AG04449 (cell line): ENCODE measurements at regions of chr12 and their contacts with region 1.

Region 1: GRCh38 chr12:14257734-14258574 is 107.5 kb upstream of the ATF7IP start:
- DNase-seq: peak; percentile 99
- H3K4me3 ChIP-seq: no peak overlapping the region
- CTCF ChIP-seq: no peak

Region 2: GRCh38 chr12:14365294-14366208 is 107.6 kb after region 1 on chr12 and contains the start of gene ATF7IP:
- CTCF ChIA-PET with region 1: interaction called, 18 read pairs
- POLR2A ChIA-PET with region 1: interaction called, 16 read pairs
- DNase-seq: peak; percentile 89
- H3K4me3 ChIP-seq: peak within 1 kb of the TSS; percentile 79
- CTCF ChIP-seq: peak; percentile 25

Region 3: DNA sequence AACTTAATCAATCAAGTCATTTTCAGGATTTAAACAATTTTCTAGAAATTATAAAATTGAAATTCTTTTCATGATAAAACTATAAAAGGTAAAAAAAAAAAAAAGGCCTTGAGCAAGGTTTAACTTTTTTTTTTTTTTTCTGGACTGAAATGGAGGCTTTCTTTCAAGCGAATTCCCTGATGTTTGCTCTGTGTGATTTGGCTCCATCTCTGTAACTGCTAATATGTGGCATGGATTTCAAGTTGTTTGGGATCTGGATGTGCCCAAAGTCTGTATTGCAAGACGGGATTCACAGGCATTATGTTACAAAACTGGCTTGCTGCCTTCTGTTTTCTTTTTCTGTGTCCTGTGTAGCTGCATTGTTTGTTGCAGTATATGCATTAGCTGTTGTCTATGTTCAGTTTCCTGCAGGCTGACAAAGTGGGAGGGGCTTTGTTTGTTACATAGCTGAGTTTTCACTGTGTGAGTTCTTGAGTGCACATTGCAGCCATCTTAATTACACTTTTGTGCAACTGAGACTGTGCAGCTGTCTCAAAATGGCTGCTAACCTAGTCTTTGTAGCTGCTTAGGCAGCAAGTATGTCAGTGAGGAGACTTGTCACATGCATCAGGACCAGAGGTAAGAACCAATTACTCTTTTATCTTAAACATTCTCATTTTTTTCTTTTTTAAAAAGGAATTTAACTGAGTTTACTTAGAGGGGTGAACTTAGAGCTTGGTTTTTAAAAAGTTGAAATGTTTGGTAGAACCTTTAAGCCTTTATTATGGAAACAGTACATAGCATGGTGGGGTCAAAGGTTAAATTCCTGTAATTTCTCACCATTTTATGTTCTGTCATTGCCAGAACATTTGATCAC is 127.1 kb after region 1 on chr12:
- CTCF ChIA-PET with region 1: interaction called, 15 read pairs
- POLR2A ChIA-PET with region 1: interaction called, 9 read pairs
- DNase-seq: peak; percentile 75
- H3K4me3 ChIP-seq: peak overlapping the region; percentile 36
- CTCF ChIP-seq: no peak

Region 4: DNA sequence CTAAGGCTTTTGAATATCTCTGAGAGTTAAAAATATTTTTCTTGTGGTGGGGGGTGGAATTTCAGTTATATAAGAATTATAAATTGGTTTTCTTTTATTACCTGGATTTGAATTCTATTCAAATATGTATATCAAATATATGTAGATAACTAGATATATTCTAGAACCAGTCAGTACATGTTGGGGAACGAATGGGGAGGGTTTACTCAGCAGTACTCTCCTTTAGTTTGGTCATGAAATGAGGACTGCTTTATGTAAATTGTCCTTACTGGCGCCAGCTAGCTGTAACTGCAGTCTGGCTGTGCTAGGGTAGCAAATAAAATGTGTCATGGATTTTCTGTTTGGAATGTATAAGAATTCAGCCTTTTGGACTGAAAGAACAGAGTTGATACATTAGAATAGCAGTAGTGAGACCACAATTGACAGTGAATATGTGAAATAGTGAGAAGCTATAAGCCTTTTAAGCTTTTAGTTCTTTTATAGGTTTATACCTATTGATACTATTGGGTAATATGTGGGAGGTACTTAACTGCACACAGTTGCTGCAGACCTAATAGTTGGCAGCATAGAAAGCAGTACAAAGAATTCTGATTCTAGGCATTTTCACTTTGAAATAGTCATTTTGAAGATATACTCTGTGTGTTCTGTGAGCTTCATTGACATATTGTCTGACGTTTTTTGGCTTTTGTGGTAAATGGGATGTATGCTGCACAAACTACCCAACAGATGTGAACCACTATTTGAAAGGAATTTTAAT is 136.5 kb after region 1 on chr12:
- CTCF ChIA-PET with region 1: interaction called, 3 read pairs
- POLR2A ChIA-PET with region 1: interaction called, 14 read pairs
- DNase-seq: peak; percentile 46
- H3K4me3 ChIP-seq: no peak overlapping the region
- CTCF ChIP-seq: no peak

Region 5: GRCh38 chr12:14417715-14418114 is 159.8 kb after region 1 on chr12:
- CTCF ChIA-PET with region 1: interaction called, 13 read pairs
- POLR2A ChIA-PET with region 1: interaction called, 4 read pairs
- DNase-seq: peak; percentile 68
- H3K4me3 ChIP-seq: no peak overlapping the region
- CTCF ChIP-seq: no peak

Region 6: DNA sequence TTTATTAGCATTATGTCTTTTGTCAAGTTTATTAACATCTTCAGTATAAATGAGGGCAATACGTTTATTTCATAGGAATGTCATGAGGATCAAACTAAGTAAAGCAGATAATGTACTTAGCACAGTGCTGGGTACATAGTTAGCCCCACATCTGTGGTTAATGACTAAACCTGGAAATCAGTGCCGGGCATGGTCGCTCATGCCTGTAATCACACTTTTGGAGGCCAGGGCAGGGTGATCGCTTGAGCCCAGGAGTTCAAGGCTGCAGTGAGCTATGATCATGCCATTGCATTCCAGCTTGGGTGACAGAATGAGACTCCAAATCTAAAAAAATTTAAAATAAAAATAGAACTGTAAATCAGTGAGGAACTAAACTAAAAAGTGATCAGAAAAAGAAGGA is 483.2 kb after region 1 on chr12:
- CTCF ChIA-PET with region 1: no interaction called
- POLR2A ChIA-PET with region 1: no interaction called
- DNase-seq: no peak
- H3K4me3 ChIP-seq: no peak overlapping the region
- CTCF ChIP-seq: no peak